ENCODE measurements at regions of chr19 and their contacts with region 1.

Region 1: GRCh38 chr19:36060430-36060829 is 5.7 kb downstream of the WDR62 start:
- DNase-seq: peak; percentile 17
- H3K4me3 ChIP-seq: no peak overlapping the region
- H3K27ac ChIP-seq: no peak overlapping the region
- H3K4me1 ChIP-seq: peaks cover 5% of the 10 kb centered on the region
- H3K27me3 ChIP-seq: no peaks in the 10 kb centered on the region
- CTCF ChIP-seq: peak; percentile 52 to 77

Region 2: DNA sequence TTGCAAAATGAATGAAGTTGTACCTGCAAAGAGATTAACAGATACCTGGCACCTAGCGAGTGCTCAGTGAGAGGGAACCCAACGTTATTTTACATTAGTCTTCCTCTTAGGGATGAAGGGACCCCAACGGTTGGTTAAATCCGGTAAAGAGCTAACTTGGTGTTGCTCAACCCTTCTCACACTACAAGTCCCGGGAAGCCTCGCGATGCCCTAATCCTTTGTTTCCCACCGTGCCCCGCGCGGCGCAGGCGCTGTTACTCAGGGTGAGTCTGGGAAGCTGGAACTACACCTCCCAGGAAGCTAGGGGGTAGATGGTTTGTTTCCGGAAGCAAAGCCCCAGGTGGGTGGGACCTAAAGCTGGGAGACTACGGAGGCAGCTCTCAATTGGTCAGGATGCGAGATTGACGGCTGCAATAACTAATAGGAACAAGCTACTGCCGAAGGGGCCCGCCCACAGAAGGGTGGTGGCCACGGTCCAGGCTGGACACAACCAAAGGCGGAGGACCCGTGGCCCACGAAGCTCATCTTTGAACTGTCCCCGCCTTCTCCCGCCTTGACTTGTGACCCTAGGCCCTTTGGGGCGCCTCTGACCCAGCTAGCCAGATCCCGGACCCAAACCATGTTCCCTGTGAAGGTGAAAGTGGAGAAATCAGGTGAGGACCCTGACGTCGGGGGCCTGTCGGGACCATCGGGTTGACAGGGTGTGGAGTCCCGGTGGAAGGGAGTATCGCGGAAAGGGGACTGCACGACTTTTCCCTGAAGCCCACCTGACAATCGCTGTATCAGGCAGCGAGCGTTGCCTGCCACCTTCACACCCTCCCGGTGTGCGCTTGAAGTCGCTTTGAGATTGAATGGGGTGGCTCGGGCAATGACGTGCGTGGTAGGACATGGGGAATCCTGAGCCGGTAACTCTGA is 312.1 kb before region 1 on chr19 and contains the start of gene LIN37:
- CTCF ChIA-PET with region 1: no interaction called
- dilution Hi-C with region 1: no loop called
- in situ Hi-C with region 1: no loop called
- intact Hi-C with region 1: no loop called
- DNase-seq: peak; percentile 99
- H3K4me3 ChIP-seq: peak within 1 kb of the TSS; percentile 68 to 97 (median 86)
- H3K27ac ChIP-seq: peak within 1 kb of the TSS; percentile 64
- H3K4me1 ChIP-seq: peaks cover 13% of the 10 kb centered on the region
- H3K27me3 ChIP-seq: no peaks in the 10 kb centered on the region
- CTCF ChIP-seq: peak in 1 of 2 donors; percentile 7
- total RNA-seq, gene LIN37: 13.6 to 14.5 TPM

Region 3: DNA sequence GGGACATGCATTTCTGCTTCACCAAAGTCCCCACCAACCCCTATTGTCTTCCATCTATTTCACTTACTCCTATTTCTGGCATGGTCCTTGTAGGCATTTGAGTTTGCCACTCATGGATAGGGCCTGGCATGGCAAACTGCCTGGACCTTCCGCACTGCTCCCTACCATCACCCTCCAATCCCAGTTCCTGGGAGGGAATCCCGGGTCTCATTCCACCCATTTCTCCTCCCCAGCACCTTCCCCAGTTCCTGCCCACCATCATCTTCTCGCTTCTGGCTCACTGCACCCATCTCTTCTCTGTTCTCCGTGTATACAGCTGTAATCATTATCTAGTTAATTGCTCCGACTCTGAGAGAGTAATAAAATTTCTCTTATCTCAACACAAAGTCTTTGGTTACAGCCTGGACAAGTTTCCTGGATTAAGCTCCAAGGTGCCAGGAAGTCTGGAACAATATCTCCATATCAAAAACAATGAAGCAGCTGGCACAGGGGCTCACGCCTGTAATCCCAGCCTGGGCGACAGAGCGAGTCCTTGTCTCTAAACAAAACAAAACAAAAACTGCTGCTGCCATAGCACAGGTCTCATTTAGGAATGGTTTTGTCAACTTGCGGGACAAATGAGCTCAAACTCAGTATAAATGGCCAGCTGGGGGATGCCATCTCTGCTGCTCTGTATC is 108.8 kb after region 1 on chr19:
- CTCF ChIA-PET with region 1: no interaction called
- dilution Hi-C with region 1: no loop called
- in situ Hi-C with region 1: no loop called
- intact Hi-C with region 1: loop called (anchors 1 kb)
- DNase-seq: no peak
- H3K4me3 ChIP-seq: no peak overlapping the region
- H3K27ac ChIP-seq: no peak overlapping the region
- H3K4me1 ChIP-seq: no peaks in the 10 kb centered on the region
- H3K27me3 ChIP-seq: no peaks in the 10 kb centered on the region
- CTCF ChIP-seq: no peak

Region 4: GRCh38 chr19:36196249-36196648 is 135.8 kb after region 1 on chr19:
- CTCF ChIA-PET with region 1: no interaction called
- dilution Hi-C with region 1: no loop called
- in situ Hi-C with region 1: no loop called
- intact Hi-C with region 1: no loop called
- DNase-seq: no peak
- H3K4me3 ChIP-seq: no peak overlapping the region
- H3K27ac ChIP-seq: no peak overlapping the region
- H3K4me1 ChIP-seq: no peaks in the 10 kb centered on the region
- H3K27me3 ChIP-seq: no peaks in the 10 kb centered on the region
- CTCF ChIP-seq: no peak

Measured in mammary epithelial cell (primary cell).